ENCODE measurements at regions of chrX and their contacts with region 1.

Region 1: GRCh38 chrX:47384502-47384901 is 14.1 kb downstream of the ZNF157 start:
- DNase-seq: peak; percentile 75
- H3K4me3 Mint-ChIP-seq: no peak overlapping the region
- H3K27ac Mint-ChIP-seq: no peak overlapping the region
- H3K4me1 Mint-ChIP-seq: peaks cover 24% of the 10 kb centered on the region
- H3K27me3 Mint-ChIP-seq: no peaks in the 10 kb centered on the region

Region 2: GRCh38 chrX:47193475-47194193 is 190.9 kb before region 1 on chrX and contains the start of gene UBA1:
- CTCF ChIA-PET with region 1: interaction called, 17 read pairs
- DNase-seq: peak; percentile 94
- H3K4me3 Mint-ChIP-seq: peak within 1 kb of the TSS; percentile 97
- H3K27ac Mint-ChIP-seq: peak within 1 kb of the TSS; percentile 98
- H3K4me1 Mint-ChIP-seq: peaks cover 57% of the 10 kb centered on the region
- H3K27me3 Mint-ChIP-seq: no peaks in the 10 kb centered on the region

Region 3: GRCh38 chrX:47311932-47312774 is 72.3 kb before region 1 on chrX:
- CTCF ChIA-PET with region 1: interaction called, 12 read pairs
- DNase-seq: peak; percentile 51
- H3K4me3 Mint-ChIP-seq: no peak overlapping the region
- H3K27ac Mint-ChIP-seq: no peak overlapping the region
- H3K4me1 Mint-ChIP-seq: no peaks in the 10 kb centered on the region
- H3K27me3 Mint-ChIP-seq: no peaks in the 10 kb centered on the region

Region 4: GRCh38 chrX:47706575-47706974 is 322.1 kb after region 1 on chrX:
- CTCF ChIA-PET with region 1: no interaction called
- DNase-seq: no peak
- H3K4me3 Mint-ChIP-seq: no peak overlapping the region
- H3K27ac Mint-ChIP-seq: no peak overlapping the region
- H3K4me1 Mint-ChIP-seq: no peaks in the 10 kb centered on the region
- H3K27me3 Mint-ChIP-seq: peaks cover 4% of the 10 kb centered on the region

Measured in activated naive CD4-positive, alpha-beta T cell treated with anti-CD3 and anti-CD28 coated beads, Interleukin-2, amount 10 ng/mL, durations not matched to agents 7 days and 5 days (primary cell).